Activated CD4-positive, alpha-beta T cell treated with anti-CD3 and anti-CD28 coated beads, Interleukin-2, amount 10 ng/mL, durations not matched to agents 24 days and 14 days (primary cell): ENCODE measurements at regions of chr6 and their contacts with region 1.

Region 1: DNA sequence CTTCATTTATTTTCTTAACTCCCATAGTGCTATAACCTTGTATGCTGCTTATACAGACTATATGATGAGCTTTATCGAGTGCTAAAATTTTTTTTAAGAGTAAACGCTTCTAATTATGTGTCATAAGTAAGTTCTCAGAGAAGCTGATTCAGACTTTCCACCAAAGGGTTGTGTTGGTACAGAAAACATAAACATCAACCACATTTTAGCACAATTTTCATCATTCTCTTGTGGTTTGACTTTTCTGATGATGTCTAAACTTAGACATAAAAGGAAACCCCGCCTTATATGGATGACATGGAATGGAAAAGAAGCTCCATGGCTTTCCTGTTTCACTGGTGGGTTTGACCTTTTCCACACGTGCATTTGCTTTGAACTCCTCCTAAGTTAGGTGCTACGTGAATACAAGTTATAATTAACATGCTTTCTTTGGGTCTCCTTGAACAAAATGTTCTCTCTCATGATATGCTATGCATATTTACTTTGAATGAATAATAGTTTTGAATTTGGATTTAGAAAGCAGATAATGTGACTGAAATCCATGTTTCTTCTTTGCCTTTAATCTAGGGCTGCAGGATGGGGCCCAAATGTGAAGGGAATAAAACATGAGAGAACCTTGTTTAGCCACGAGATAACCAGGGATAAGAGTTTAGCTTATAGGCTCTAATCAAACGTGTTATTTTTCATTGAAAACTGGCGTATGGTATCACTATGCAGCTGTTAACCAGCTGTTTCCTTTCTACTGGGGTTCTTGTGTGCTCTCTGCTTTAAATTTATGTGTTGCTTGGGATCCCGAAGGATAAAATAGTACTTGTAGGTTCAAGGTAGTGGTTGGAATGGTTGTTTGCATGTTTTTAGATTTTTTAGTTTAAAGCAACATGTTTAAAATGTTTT is 127.1 kb upstream of the AHI1 start:
- DNase-seq: peak; percentile 83
- H3K4me3 Mint-ChIP-seq: peak overlapping the region; percentile 46
- H3K27ac Mint-ChIP-seq: peak overlapping the region; percentile 98
- H3K4me1 Mint-ChIP-seq: peaks cover 61% of the 10 kb centered on the region
- H3K27me3 Mint-ChIP-seq: no peaks in the 10 kb centered on the region

Region 2: GRCh38 chr6:135568366-135568765 is 56.3 kb before region 1 on chr6:
- intact Hi-C with region 1: loop called (anchors 1 kb)
- DNase-seq: peak; percentile 90
- H3K4me3 Mint-ChIP-seq: peak overlapping the region; percentile 64
- H3K27ac Mint-ChIP-seq: peak overlapping the region; percentile 92
- H3K4me1 Mint-ChIP-seq: peaks cover 62% of the 10 kb centered on the region
- H3K27me3 Mint-ChIP-seq: no peaks in the 10 kb centered on the region

Region 3: DNA sequence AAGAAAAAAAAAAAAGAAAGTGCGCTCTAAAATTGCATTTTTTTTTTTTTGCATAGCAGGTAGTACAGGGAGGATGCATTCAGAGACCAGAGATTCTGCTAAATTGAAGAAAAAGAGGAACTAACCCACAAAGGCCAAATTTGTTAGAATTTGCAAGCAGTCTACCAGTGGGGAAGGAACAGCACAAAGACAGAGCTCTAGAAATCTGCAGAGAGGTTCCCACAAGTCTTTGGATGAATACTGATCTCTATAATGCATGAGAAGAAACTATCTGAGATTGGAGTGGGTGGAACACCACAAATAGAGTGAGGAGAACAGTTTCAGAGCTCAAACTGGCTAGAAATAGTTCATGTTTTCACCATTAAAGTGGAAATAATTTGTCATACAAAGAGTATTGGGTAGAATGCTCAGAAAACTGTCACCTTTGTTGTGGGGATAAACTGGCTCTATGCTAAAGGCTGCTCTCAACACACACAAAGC is 47.5 kb before region 1 on chr6:
- intact Hi-C with region 1: loop called (anchors 1 kb)
- DNase-seq: peak; percentile 74
- H3K4me3 Mint-ChIP-seq: peak overlapping the region; percentile 39
- H3K27ac Mint-ChIP-seq: peak overlapping the region; percentile 96
- H3K4me1 Mint-ChIP-seq: peaks cover 45% of the 10 kb centered on the region
- H3K27me3 Mint-ChIP-seq: no peaks in the 10 kb centered on the region

Region 4: GRCh38 chr6:135586841-135587240 is 37.8 kb before region 1 on chr6:
- intact Hi-C with region 1: loop called (anchors 1 kb)
- DNase-seq: peak; percentile 89
- H3K4me3 Mint-ChIP-seq: peak overlapping the region; percentile 34
- H3K27ac Mint-ChIP-seq: peak overlapping the region; percentile 97
- H3K4me1 Mint-ChIP-seq: peaks cover 70% of the 10 kb centered on the region
- H3K27me3 Mint-ChIP-seq: no peaks in the 10 kb centered on the region

Region 5: DNA sequence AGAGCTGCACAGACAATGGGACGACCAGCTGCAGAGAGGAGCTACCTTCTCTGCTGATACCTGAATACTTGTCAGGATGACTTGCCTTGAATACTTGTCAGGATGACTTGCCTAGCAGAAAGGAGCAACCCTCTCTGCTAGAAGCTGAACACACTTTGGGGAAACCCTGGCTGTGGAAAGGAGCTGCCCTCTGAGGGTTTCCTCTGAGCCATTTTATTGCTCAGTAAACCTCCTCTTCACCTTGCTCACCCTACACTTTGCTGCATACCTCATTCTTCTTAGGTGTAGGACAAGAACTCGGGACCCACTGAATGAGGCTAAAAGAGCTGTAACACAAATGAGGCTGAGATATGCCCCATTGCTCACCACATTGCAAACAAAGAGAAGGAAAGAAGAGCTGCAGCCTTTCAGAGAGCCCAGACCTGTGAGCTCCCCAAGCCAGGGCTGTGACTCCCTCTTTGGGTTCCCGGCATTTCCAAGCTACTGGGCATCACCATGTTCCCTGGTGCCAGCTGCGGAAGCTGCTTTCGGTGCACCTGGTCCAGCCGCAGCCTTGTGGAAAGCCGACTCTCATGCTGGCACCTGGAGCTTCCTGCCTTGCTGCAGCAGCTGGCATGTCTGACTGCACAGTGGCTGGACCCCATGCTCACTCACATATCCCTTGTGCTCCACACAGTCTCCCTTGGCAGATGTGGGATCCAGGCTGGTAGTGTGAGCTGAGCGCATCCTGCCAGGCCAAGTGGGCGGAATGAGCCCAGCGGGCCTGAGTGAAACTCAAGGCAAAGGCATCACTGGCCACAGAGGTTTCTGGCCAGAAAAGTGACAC is 20.4 kb before region 1 on chr6:
- intact Hi-C with region 1: loop called (anchors 1 kb)
- DNase-seq: peak; percentile 56
- H3K4me3 Mint-ChIP-seq: no peak overlapping the region
- H3K27ac Mint-ChIP-seq: peak overlapping the region; percentile 90
- H3K4me1 Mint-ChIP-seq: peaks cover 31% of the 10 kb centered on the region
- H3K27me3 Mint-ChIP-seq: no peaks in the 10 kb centered on the region

Region 6: GRCh38 chr6:135640449-135641111 is 15.9 kb after region 1 on chr6:
- intact Hi-C with region 1: loop called (anchors 1 kb)
- DNase-seq: no peak
- H3K4me3 Mint-ChIP-seq: peak overlapping the region; percentile 46
- H3K27ac Mint-ChIP-seq: peak overlapping the region; percentile 87
- H3K4me1 Mint-ChIP-seq: peaks cover 53% of the 10 kb centered on the region
- H3K27me3 Mint-ChIP-seq: no peaks in the 10 kb centered on the region